SK-N-SH (cell line): ENCODE measurements at regions of chrX and their contacts with region 1.

Region 1: DNA sequence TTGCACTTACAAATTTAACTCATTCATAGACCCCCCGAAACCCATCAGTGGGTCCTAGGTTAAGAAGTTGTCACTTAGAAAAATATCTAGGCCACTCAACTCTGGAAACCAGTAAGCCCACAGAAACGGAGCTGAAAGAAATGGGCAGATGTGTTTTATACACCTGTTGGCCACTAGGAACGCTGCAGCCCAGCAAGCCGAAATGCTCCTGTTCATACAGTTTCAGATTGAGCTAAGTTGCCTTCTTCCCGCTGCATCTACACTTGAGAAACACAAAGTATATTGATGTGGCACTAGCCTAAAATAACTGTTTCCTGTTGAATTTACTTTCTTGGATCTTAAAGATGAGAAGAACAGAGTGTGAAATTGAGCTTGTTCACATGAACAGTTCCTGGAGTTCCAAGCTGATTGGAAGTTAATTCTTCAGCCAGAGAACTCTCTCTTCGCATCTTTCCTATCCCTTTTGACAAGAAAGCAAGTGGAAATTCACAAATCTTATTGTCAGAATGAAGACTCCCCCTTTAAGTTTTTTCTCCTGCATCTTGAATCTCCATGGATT is 174.1 kb downstream of the RBMX2 start:
- DNase-seq: peak; percentile 55
- H3K4me3 ChIP-seq: no peak overlapping the region; a peak in 1 of 4 replicates
- H3K27ac ChIP-seq: no peak overlapping the region
- H3K4me1 ChIP-seq: no peaks in the 10 kb centered on the region
- H3K27me3 ChIP-seq: no peaks in the 10 kb centered on the region
- CTCF ChIP-seq: peak; percentile 87
- EP300 ChIP-seq: no peak
- RAD21 ChIP-seq: peak; percentile 80

Region 2: DNA sequence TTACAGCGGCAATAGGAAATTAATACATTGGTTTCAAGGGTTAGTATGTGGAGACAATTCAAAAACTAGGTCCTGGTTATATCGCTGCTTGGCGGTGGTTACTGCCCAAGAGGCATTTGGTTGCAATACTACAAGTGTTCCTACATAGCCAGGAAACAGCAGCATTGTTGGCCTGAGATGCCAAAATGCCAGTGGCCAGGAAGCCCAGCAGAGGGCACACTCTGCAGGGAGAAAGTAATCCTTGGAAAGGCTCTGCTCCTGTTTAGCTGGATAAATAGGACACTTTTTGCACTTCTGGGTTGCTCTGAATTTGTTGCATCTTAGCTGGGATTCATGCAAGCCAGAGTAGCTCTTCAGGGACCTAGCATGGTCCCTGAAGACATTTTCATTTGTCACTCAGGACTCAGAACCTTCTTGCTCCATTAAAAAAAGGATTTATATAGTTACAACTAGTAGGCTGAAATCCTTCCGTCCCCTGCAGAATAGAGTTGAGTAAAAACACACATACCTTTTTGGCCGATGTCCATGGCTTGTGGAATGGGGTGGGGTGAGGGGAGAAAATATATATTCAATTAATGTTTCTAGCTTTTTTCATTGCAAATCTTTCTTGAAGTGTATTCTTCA is 182.3 kb before region 1 on chrX:
- CTCF ChIA-PET with region 1: interaction called, 14 read pairs
- POLR2A ChIA-PET with region 1: no interaction called
- DNase-seq: peak; percentile 64
- H3K4me3 ChIP-seq: no peak overlapping the region; a peak in 1 of 4 replicates
- H3K27ac ChIP-seq: no peak overlapping the region
- H3K4me1 ChIP-seq: no peaks in the 10 kb centered on the region
- H3K27me3 ChIP-seq: peaks cover 8% of the 10 kb centered on the region; the same call in 1 of the 2 replicates
- CTCF ChIP-seq: peak; percentile 83
- EP300 ChIP-seq: no peak
- RAD21 ChIP-seq: peak; percentile 81

Region 3: GRCh38 chrX:130560544-130560943 is 15.4 kb before region 1 on chrX:
- CTCF ChIA-PET with region 1: interaction called, 18 read pairs
- POLR2A ChIA-PET with region 1: no interaction called
- DNase-seq: no peak
- H3K4me3 ChIP-seq: no peak overlapping the region
- H3K27ac ChIP-seq: no peak overlapping the region
- H3K4me1 ChIP-seq: no peaks in the 10 kb centered on the region
- H3K27me3 ChIP-seq: no peaks in the 10 kb centered on the region
- CTCF ChIP-seq: no peak
- EP300 ChIP-seq: no peak
- RAD21 ChIP-seq: no peak

Region 4: GRCh38 chrX:130606425-130606824 is 30.5 kb after region 1 on chrX:
- CTCF ChIA-PET with region 1: interaction called, 21 read pairs
- POLR2A ChIA-PET with region 1: no interaction called
- DNase-seq: no peak
- H3K4me3 ChIP-seq: no peak overlapping the region
- H3K27ac ChIP-seq: no peak overlapping the region
- H3K4me1 ChIP-seq: no peaks in the 10 kb centered on the region
- H3K27me3 ChIP-seq: no peaks in the 10 kb centered on the region
- CTCF ChIP-seq: no peak
- EP300 ChIP-seq: no peak
- RAD21 ChIP-seq: no peak

Region 5: DNA sequence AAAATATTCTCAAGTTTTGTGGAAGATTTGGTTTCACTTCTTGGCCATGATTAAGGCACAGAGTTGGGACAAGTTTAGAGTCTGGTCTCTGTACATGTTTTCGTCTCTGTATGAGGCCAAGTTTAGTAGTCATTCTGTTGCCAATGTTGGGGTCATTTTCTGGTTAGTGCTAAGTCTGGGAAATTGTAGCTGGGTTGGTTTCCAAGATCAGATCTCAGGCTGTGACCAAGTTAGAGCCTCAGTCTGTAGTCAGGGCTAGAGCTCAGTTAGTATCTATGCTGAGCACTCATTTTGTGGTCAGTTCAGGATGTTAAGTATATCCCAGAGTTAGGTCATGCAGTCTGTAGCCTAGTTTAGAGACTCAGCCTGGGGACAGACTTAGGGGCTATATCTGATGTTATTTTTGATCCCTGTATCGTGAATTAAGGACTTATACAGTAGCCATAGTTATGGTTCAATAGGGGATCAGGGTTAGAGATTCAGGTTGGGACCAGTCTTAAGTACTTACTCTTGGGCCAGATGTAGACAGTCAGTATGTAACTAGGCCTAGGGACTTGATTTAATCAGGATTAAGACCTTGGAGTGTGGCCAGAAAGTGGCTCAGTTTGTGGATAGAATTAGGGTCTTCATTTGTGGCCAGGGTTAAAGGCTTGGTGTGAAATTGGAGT is 333.7 kb after region 1 on chrX:
- CTCF ChIA-PET with region 1: interaction called, 51 read pairs
- POLR2A ChIA-PET with region 1: no interaction called
- DNase-seq: no peak
- H3K4me3 ChIP-seq: no peak overlapping the region
- H3K27ac ChIP-seq: no peak overlapping the region
- H3K4me1 ChIP-seq: no peaks in the 10 kb centered on the region
- H3K27me3 ChIP-seq: peaks cover 9% of the 10 kb centered on the region; the same call in 1 of the 2 replicates
- CTCF ChIP-seq: no peak
- EP300 ChIP-seq: no peak
- RAD21 ChIP-seq: no peak